ENCODE measurements at regions of chr5 and their contacts with region 1.

Region 1: GRCh38 chr5:111530298-111530740 is 18.0 kb upstream of the STARD4 start:
- DNase-seq: peak; percentile 57
- H3K4me3 Mint-ChIP-seq: peak overlapping the region; percentile 31
- H3K27ac Mint-ChIP-seq: peak overlapping the region; percentile 68
- H3K4me1 Mint-ChIP-seq: peaks cover 11% of the 10 kb centered on the region
- H3K27me3 Mint-ChIP-seq: no peaks in the 10 kb centered on the region
- CTCF ChIP-seq: no peak

Region 2: GRCh38 chr5:111337688-111338087 is 192.6 kb before region 1 on chr5:
- CTCF ChIA-PET with region 1: no interaction called
- intact Hi-C with region 1: no loop called
- DNase-seq: no peak
- H3K4me3 Mint-ChIP-seq: no peak overlapping the region
- H3K27ac Mint-ChIP-seq: no peak overlapping the region
- H3K4me1 Mint-ChIP-seq: no peaks in the 10 kb centered on the region
- H3K27me3 Mint-ChIP-seq: no peaks in the 10 kb centered on the region
- CTCF ChIP-seq: no peak

Region 3: GRCh38 chr5:111512375-111513130 is 17.8 kb before region 1 on chr5 and contains the start of gene STARD4:
- CTCF ChIA-PET with region 1: interaction called, 13 read pairs
- intact Hi-C with region 1: no loop called
- DNase-seq: peak; percentile 99
- H3K4me3 Mint-ChIP-seq: peak within 1 kb of the TSS; percentile 98
- H3K27ac Mint-ChIP-seq: peak within 1 kb of the TSS; percentile 83
- H3K4me1 Mint-ChIP-seq: peaks cover 25% of the 10 kb centered on the region
- H3K27me3 Mint-ChIP-seq: no peaks in the 10 kb centered on the region
- CTCF ChIP-seq: no peak
- total RNA-seq, gene STARD4: 65.0 and 66.6 TPM in 2 replicates

Region 4: DNA sequence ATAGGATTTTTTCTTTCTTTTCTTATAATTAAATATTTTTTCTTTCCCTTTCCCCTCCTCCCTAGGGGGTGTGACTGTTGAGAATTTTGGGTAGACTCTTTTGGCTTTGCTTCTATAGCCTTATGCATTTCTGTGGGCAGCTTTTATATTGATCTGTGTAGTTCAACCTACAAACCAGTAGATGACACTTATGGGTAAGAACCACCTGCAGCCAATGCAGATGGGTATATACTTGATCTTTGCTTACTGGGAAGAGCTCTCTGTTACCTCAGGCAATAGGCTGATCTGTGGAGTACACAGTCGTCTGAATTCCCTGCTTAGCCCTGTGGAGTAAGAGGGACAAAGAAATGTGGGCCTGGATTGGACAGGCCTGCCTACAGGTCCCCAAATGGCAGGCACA is 84.7 kb after region 1 on chr5:
- CTCF ChIA-PET with region 1: no interaction called
- intact Hi-C with region 1: no loop called
- DNase-seq: no peak
- H3K4me3 Mint-ChIP-seq: no peak overlapping the region
- H3K27ac Mint-ChIP-seq: no peak overlapping the region
- H3K4me1 Mint-ChIP-seq: no peaks in the 10 kb centered on the region
- H3K27me3 Mint-ChIP-seq: no peaks in the 10 kb centered on the region
- CTCF ChIP-seq: no peak

Measured in Calu3 (cell line).